Activated CD4-positive, alpha-beta T cell treated with anti-CD3 and anti-CD28 coated beads for 36 hours (primary cell): ENCODE measurements at regions of chr9 and their contacts with region 1.

Region 1: DNA sequence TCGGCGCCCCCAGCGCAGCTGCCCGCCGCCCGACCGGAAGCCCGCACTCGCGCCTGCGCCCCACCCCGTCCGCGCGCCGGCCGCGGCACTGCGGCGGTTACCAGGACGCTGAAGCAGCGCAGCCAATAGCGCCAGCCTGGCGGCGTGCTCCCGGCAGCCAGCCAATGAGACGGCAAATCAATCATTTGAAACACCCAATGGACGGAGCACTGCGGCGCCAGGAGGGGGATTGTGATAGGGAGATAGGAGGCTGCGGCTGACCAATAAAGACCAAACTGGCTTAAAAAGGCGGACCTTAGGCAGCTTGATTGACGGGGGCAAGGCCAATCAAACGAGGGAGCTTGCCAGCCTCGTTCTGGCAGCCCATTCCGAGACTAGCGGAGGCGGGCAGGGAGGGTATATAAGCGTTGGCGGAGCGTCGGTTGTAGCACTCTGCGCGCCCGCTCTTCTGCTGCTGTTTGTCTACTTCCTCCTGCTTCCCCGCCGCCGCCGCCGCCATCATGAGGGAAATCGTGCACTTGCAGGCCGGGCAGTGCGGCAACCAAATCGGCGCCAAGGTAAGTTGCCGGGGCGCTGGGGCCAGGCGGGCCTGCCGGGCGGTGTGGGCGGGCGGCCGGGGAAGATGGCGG is at the start of gene TUBB4B:
- DNase-seq: peak; percentile 98
- ATAC-seq: peak; percentile 84
- H3K4me3 Mint-ChIP-seq: peak within 1 kb of the TSS; percentile 83
- H3K27ac Mint-ChIP-seq: peak within 1 kb of the TSS; percentile 87
- H3K4me1 Mint-ChIP-seq: peaks cover 27% of the 10 kb centered on the region
- H3K27me3 Mint-ChIP-seq: no peaks in the 10 kb centered on the region
- total RNA-seq, gene TUBB4B: 264 to 278 TPM

Region 2: GRCh38 chr9:136700959-136701667 is 539.9 kb before region 1 on chr9:
- CTCF ChIA-PET with region 1: no interaction called
- POLR2A ChIA-PET with region 1: interaction called, 5 read pairs
- intact Hi-C with region 1: loop called in 1 of 2 experiments (anchors 1 kb)
- DNase-seq: peak; percentile 92
- ATAC-seq: peak; percentile 97
- H3K4me3 Mint-ChIP-seq: peak overlapping the region; percentile 62
- H3K27ac Mint-ChIP-seq: peak overlapping the region; percentile 91
- H3K4me1 Mint-ChIP-seq: peaks cover 20% of the 10 kb centered on the region
- H3K27me3 Mint-ChIP-seq: peaks cover 20% of the 10 kb centered on the region

Region 3: GRCh38 chr9:137046098-137046787 is 194.7 kb before region 1 on chr9 and contains the start of gene NPDC1:
- CTCF ChIA-PET with region 1: interaction called, 4 read pairs
- POLR2A ChIA-PET with region 1: no interaction called
- intact Hi-C with region 1: loop called in 1 of 2 experiments (anchors 5 kb)
- DNase-seq: peak; percentile 92
- ATAC-seq: peak; percentile 65
- H3K4me3 Mint-ChIP-seq: peak within 1 kb of the TSS; percentile 61
- H3K27ac Mint-ChIP-seq: no peak within 1 kb of the TSS
- H3K4me1 Mint-ChIP-seq: peaks cover 12% of the 10 kb centered on the region
- H3K27me3 Mint-ChIP-seq: peaks cover 34% of the 10 kb centered on the region
- total RNA-seq, gene NPDC1: 21.0 to 23.1 TPM

Region 4: DNA sequence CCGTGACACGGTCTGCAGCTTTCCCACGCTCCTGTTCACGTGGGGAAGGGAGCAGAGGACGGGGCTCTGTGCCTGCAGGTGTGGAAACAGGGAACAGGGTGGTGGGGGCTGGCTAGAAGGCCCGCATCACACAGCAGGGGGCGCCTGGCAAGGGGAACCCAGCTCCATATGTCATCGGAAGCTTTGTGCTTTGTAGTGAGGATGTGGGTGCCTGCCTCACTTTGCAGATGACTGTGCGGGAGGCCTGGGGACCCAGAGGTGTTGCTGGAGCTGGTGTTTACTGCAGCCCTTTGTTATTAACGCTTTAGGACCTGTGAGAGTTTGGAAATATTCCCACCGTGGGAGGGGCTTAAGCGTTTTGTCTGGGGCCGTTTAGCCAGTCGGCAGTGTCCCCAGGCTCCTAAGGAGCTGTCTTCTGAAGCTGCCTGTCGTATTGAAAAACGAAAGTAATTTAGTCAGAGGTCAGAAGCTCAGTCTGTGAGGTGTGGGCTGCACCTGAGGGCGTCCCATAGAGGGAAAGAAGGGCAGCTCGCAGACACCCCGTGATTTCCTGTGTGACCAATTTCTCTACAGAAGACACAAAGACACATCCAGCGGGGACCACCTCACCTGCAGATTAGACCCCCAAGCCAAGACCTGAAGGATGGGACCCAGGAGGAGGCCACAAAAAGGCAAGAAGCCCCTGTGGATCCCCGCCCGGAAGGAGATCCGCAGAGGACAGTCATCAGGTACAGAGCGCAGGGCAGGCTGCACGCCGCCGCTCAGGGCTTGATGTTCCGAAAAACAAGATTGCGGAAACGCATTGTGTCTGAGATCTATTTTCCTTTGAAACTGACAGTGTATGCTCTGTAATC is 145.1 kb before region 1 on chr9:
- CTCF ChIA-PET with region 1: interaction called, 10 read pairs
- POLR2A ChIA-PET with region 1: interaction called, 3 read pairs
- intact Hi-C with region 1: no loop called
- DNase-seq: peak; percentile 94
- ATAC-seq: peak; percentile 98
- H3K4me3 Mint-ChIP-seq: peak overlapping the region; percentile 70
- H3K27ac Mint-ChIP-seq: peak overlapping the region; percentile 91
- H3K4me1 Mint-ChIP-seq: peaks cover 17% of the 10 kb centered on the region
- H3K27me3 Mint-ChIP-seq: no peaks in the 10 kb centered on the region

Region 5: DNA sequence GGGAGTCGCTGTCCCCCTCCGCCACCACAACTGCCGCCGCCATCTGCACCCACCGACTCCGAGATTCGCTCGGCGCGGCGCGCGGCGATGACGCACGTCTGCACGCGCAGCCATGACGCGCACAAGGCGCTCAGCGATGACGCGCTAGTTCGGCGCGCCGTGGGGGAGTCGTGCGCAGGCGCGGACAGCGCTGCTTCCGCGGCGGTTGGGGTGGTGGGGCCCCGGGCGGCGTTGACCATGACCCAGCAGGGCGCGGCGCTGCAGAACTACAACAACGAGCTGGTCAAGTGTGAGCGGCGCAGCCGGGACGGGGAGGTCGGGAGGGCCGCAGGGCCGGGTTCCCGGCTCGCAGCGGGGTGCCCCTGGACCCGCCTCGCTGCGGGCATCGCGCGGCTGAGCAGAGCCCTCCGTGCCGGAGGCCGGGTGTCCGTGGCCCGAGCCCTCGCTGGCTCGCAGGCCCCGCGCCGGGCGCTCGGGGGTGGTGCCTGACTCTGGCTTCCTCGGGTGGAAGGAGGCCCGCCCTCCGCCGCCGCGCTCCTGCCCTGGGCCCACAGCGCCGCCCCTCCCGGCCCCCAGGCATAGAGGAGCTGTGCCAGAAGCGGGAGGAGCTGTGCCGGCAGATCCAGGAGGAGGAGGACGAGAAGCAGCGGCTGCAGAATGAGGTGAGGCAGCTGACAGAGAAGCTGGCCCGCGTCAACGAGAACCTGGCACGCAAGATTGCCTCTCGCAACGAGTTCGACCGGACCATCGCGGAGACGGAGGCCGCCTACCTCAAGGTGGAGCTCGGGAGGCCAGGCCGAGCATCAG is 52.3 kb before region 1 on chr9 and contains the starts of genes ANAPC2 and SSNA1:
- CTCF ChIA-PET with region 1: interaction called, 5 read pairs
- POLR2A ChIA-PET with region 1: no interaction called
- intact Hi-C with region 1: loop called (anchors 1 to 2 kb)
- DNase-seq: peak; percentile 96
- ATAC-seq: peak; percentile 85
- H3K4me3 Mint-ChIP-seq: peak within 1 kb of the TSS; percentile 91
- H3K27ac Mint-ChIP-seq: peak within 1 kb of the TSS; percentile 88
- H3K4me1 Mint-ChIP-seq: peaks cover 33% of the 10 kb centered on the region
- H3K27me3 Mint-ChIP-seq: no peaks in the 10 kb centered on the region
- total RNA-seq, gene ANAPC2: 30.8 to 38.4 TPM
- total RNA-seq, gene SSNA1: 53.6 to 58.6 TPM

Region 6: GRCh38 chr9:137350696-137351584 is 110.0 kb after region 1 on chr9:
- CTCF ChIA-PET with region 1: no interaction called
- POLR2A ChIA-PET with region 1: no interaction called
- intact Hi-C with region 1: no loop called
- DNase-seq: no peak
- ATAC-seq: no peak
- H3K4me3 Mint-ChIP-seq: no peak overlapping the region
- H3K27ac Mint-ChIP-seq: no peak overlapping the region
- H3K4me1 Mint-ChIP-seq: no peaks in the 10 kb centered on the region
- H3K27me3 Mint-ChIP-seq: no peaks in the 10 kb centered on the region

Region 7: DNA sequence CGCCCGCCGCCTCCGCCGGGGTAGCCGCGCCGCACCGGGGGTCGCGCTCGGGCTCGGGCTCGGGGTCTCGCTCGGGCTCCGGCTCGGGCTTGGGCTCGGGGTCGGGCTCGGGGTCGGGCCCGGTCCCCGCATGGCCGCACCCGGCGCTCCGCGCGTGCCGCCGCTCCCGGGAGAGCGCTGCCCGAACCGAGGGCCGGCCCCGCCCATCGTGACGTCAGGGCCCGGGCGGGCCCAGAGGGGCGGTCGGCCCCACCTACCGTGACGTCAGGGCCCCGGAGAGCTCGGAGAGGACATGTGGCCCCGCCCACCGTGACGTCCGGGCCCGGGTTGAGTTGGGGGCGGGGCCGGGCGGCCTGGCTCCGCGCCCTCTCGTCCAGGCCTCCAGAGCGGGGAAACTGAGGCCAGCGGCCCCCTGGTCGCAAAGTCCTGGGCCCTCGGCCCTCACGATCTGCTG is 218.2 kb after region 1 on chr9 and contains the start of gene NSMF:
- CTCF ChIA-PET with region 1: no interaction called
- POLR2A ChIA-PET with region 1: no interaction called
- intact Hi-C with region 1: loop called in 1 of 2 experiments (anchors 1 kb)
- DNase-seq: peak; percentile 98
- ATAC-seq: peak; percentile 66
- H3K4me3 Mint-ChIP-seq: peak within 1 kb of the TSS; percentile 39
- H3K27ac Mint-ChIP-seq: peak within 1 kb of the TSS; percentile 78
- H3K4me1 Mint-ChIP-seq: peaks cover 33% of the 10 kb centered on the region
- H3K27me3 Mint-ChIP-seq: no peaks in the 10 kb centered on the region
- total RNA-seq, gene NSMF: 63.6 to 65.0 TPM